RWPE1 (cell line): ENCODE measurements at regions of chr15 and their contacts with region 1.

Region 1: GRCh38 chr15:78056714-78057269 is 20.7 kb downstream of the TBC1D2B start:
- DNase-seq: peak; percentile 57
- H3K27ac ChIP-seq: peak overlapping the region; percentile 85
- CTCF ChIP-seq: no peak

Region 2: GRCh38 chr15:77617476-77618230 is 439.1 kb before region 1 on chr15:
- CTCF ChIA-PET with region 1: no interaction called
- POLR2A ChIA-PET with region 1: no interaction called
- DNase-seq: no peak
- H3K27ac ChIP-seq: no peak overlapping the region
- CTCF ChIP-seq: 0 out of 2 replicates have a peak, but pooled peaks have one; percentile 17

Region 3: GRCh38 chr15:78018946-78019644 is 37.7 kb before region 1 on chr15:
- CTCF ChIA-PET with region 1: no interaction called
- POLR2A ChIA-PET with region 1: no interaction called
- DNase-seq: no peak
- H3K27ac ChIP-seq: no peak overlapping the region
- CTCF ChIP-seq: no peak

Region 4: DNA sequence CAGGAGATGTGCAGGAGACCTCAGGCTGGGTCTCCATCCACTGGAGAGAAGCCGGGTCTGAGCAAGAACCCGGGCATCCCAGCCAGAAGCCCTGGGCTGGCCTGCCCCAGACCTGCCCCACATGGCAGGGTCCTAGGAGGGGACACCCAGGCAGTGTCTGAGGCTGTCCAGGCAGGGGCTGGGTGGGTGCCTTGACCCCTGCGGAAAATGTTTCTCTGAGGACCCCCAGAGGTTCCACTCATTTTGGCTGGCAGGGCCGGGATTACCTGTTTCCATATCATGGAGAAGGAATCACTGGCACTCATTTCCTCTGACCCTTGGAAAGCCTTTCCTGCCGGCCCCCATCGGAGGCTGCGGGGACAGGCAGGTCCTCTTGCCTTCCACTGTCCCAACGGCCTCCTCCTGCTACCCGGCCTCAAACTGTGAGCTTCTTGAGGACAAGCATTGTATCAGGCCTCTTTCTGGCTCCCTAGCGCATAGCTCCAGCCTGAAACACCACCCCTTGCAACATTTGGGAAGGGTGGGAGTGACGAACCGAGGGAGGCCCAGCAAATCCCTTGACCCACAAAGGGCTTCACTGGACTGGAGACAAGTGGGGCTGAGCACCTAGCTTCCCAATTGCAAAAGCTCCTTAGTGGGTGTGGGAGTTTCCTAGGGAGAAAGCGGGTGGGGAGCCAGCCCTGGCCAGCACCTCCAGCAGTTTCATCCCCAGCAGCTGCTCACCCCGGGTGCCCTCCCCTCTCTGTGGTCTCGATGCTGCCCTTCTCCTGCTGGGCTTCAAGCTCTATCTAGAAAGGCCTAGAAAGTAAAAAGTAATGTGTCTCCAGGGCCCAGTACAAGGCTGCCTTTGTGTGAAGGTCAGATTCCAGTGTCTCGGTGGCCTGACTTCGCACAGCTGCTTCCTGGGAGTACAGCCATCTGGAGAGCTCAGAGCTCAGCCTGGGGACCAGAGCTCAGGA is 147.8 kb after region 1 on chr15:
- CTCF ChIA-PET with region 1: no interaction called
- POLR2A ChIA-PET with region 1: no interaction called
- DNase-seq: no peak
- H3K27ac ChIP-seq: no peak overlapping the region
- CTCF ChIP-seq: no peak

Region 5: DNA sequence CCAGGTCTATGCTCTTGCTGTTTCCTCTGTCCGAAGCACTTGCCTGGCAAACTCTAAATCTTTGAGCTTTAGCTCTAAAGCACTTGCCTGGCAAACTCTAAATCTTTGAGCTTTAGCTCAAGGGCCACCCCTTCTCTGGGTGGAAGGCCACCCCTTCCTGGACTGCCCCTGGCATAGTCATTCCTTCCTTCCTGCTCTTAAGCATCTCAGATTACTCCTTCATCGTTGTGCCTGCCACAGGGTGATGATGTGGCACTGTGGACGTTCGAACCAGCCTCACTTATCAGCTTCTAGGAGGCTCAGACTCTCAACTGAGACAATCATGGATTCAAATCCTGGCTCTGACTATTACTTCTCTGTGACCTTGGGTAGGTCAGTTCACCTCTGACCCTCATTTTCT is 272.8 kb after region 1 on chr15:
- CTCF ChIA-PET with region 1: no interaction called
- POLR2A ChIA-PET with region 1: no interaction called
- DNase-seq: no peak
- H3K27ac ChIP-seq: no peak overlapping the region
- CTCF ChIP-seq: no peak

Region 6: DNA sequence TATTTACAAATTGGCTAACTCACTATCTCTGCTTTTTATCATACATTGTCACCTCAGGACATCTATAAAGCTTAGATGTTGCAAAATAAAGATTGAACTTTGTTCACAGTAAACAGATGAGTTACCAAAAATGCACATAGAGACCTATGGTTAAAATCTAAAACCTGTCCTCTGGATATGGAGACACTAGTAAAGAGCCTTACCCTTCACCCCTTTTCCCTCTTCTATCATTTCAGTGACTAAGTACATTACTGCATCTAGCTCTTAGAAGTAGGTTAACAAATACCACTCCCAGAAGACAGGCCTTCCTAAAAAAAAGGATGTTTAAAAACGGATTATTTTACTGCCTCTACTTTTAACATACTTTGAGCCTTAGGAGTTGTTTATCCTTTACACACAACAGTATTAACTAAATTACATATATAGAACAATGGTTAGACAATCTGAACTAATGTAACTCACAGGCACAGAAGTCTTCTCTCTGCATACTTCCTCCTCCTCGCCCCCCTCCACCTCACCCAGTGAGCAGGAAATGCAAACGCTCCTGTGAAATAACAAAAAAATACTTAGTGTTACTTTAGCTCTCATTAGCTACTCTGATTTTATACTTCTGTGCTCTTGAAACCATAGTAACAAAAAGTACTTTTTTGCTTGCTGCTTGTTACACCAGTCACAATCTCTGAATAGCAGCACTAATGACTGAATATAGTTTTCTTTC is 404.5 kb after region 1 on chr15:
- CTCF ChIA-PET with region 1: interaction called, 10 read pairs
- POLR2A ChIA-PET with region 1: no interaction called
- DNase-seq: no peak
- H3K27ac ChIP-seq: no peak overlapping the region
- CTCF ChIP-seq: no peak